ENCODE measurements at regions of chr18 and their contacts with region 1.

Region 1: DNA sequence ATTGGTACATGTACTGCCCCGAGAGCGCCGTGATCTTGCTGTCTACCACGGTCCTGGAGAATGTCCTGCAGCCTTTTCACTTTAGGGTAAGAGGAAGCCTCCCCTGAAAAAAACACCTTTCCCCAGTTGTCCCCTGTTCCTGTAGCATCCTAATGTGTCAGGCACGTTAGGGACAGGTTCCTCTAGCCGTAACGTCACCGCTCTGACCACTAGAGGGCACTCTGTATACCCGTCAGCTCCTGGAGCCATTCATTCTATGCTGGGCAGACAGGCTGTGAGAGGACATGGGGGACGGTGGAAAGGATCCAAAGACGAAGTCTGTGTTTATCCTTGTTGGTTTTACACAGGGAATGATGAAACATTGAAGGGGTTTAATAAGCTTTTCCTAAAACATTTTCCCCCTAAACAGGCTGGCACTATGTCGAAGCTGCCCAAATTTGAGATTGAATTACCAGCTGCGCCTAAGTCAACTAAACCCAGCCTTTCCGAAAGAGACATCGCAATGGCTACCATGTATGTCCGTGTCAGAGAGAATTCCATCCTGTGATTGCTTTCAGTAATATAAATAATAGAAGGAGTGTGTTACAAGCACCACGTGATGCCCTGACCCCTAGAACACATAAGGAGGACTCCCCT is 12.7 kb downstream of the RMC1 start:
- DNase-seq: peak; percentile 25 to 88 (median 66)
- ATAC-seq: peak; percentile 95 to 98 (median 97)
- H3K4me3 ChIP-seq: no peak overlapping the region
- H3K4me3 Mint-ChIP-seq: no peak overlapping the region
- H3K27ac ChIP-seq: no peak overlapping the region
- H3K27ac Mint-ChIP-seq: peak overlapping the region; percentile 78 to 83
- H3K4me1 ChIP-seq: peaks cover 0 to 6% of the 10 kb centered on the region in 2 experiments
- H3K4me1 Mint-ChIP-seq: peaks cover 14 to 26% (median 22%) of the 10 kb centered on the region in 3 donors
- H3K27me3 ChIP-seq: no peaks in the 10 kb centered on the region
- H3K27me3 Mint-ChIP-seq: no peaks in the 10 kb centered on the region

Region 2: DNA sequence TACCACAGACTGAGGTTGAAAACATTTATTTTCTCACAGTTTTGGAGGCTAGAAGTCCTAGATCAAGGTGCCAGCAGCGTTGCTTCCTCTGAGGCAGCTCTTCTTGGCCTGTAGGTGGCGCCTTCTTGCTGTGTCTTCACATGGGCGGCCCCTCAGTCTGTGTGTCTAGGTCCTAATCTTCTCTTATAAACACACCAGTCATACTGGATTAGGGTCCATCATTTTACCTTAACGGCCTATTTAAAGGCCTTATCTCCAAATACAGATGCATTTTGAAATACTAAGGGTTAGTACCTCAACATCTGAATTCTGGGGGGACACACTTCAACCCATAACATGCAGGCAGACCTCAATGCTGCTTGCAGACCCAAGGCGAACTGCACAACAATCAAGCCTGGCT is 17.2 kb before region 1 on chr18:
- CTCF ChIA-PET with region 1: interaction called, 3 to 11 read pairs
- POLR2A ChIA-PET with region 1: no interaction called
- DNase-seq: peak; percentile 30 to 87 (median 66)
- ATAC-seq: peak; percentile 19 to 32 (median 26)
- H3K4me3 ChIP-seq: no peak overlapping the region
- H3K4me3 Mint-ChIP-seq: no peak overlapping the region
- H3K27ac ChIP-seq: no peak overlapping the region
- H3K27ac Mint-ChIP-seq: peak overlapping the region in 1 of 2 donors; percentile 36
- H3K4me1 ChIP-seq: peaks cover 0 to 21% of the 10 kb centered on the region in 2 experiments
- H3K4me1 Mint-ChIP-seq: peaks cover 18 to 30% (median 27%) of the 10 kb centered on the region in 3 donors
- H3K27me3 ChIP-seq: no peaks in the 10 kb centered on the region
- H3K27me3 Mint-ChIP-seq: no peaks in the 10 kb centered on the region

Region 3: GRCh38 chr18:24009651-24010333 is 493.8 kb after region 1 on chr18:
- CTCF ChIA-PET with region 1: no interaction called
- POLR2A ChIA-PET with region 1: no interaction called
- DNase-seq: peak in 11 of 35 experiments; percentile 14 to 58 (median 40)
- ATAC-seq: peak; percentile 17 to 34 (median 26)
- H3K4me3 ChIP-seq: no peak overlapping the region
- H3K4me3 Mint-ChIP-seq: peak overlapping the region; percentile 19 to 79 (median 28)
- H3K27ac ChIP-seq: peak overlapping the region; percentile 85
- H3K27ac Mint-ChIP-seq: peak overlapping the region; percentile 97 to 99
- H3K4me1 ChIP-seq: peaks cover 66 to 79% of the 10 kb centered on the region in 2 experiments
- H3K4me1 Mint-ChIP-seq: peaks cover 56 to 74% (median 71%) of the 10 kb centered on the region in 3 donors
- H3K27me3 ChIP-seq: no peaks in the 10 kb centered on the region
- H3K27me3 Mint-ChIP-seq: no peaks in the 10 kb centered on the region

Measured in T-cell (primary cell).